Dorsolateral prefrontal cortex (tissue), 120 donors: ENCODE measurements at regions of chr14 and their contacts with region 1.

Region 1: DNA sequence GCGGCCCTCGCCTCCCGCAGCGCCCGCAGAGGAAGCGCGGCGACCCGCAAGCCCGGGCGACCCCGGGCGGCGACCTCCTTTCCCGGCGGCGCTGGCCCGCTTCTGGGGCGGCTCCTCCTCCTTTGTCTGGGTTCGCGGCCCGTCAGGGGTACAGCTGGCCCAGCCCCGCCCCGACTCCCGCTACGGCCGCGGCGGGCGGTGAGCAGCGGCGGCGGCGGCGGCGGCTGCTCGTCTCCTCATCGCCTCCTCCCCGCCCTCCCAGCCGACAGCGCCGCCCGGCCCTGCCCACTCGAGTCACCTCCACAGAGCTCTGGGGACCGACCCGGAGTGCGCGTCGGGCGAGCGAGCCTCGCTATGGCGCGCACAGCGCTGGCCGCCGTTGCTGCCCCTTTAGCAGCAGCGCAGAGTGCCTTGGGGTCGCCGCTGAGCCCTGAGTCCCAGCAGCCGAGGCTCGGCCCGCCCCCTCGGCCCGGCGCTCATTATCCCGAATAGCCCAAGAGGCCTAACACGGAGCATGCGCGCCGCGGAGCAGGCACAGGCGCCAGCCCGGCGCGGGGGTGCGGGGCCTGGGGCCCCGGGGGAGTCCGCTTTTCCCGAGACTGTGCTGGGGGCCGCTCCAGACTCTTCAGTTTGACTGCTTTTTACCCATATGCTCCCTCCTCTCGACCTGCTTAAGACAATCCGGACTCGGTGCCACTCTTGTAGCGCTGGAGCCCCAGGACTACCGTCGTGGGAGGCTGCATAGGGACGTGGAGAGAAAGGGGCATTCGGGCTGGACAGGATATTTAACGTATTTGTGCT is at the start of gene SOS2:
- DNase-seq: peak; percentile 77 to 89 (median 84)
- H3K4me3 ChIP-seq: peak within 1 kb of the TSS; percentile 53 to 90 (median 79)
- H3K27ac ChIP-seq: peak within 1 kb of the TSS; percentile 83 to 100 (median 96)
- H3K27me3 ChIP-seq: no peaks in the 10 kb centered on the region
- CTCF ChIP-seq: peak in 51 of 56 donors; percentile 6 to 69 (median 33)
- total RNA-seq, gene SOS2: 23.8 to 58.9 (median 37.3) TPM

Region 2: GRCh38 chr14:49852301-49853157 is 379.1 kb before region 1 on chr14 and contains the start of gene NEMF:
- intact Hi-C with region 1: loop called in 1 of 2 experiments (anchors 5 kb)
- DNase-seq: peak; percentile 72 to 91 (median 84)
- H3K4me3 ChIP-seq: peak within 1 kb of the TSS; percentile 71 to 100 (median 91)
- H3K27ac ChIP-seq: peak within 1 kb of the TSS; percentile 70 to 96 (median 91)
- H3K27me3 ChIP-seq: no peaks in the 10 kb centered on the region
- CTCF ChIP-seq: peak; percentile 75 to 98 (median 90)
- total RNA-seq, gene NEMF: 91.8 to 161 (median 124) TPM

Region 3: GRCh38 chr14:49862089-49862673 is 369.5 kb before region 1 on chr14:
- intact Hi-C with region 1: loop called in 1 of 2 experiments (anchors 2 kb)
- DNase-seq: peak; percentile 63 to 86 (median 78)
- H3K4me3 ChIP-seq: peak overlapping the region; percentile 40 to 95 (median 77)
- H3K27ac ChIP-seq: peak overlapping the region; percentile 81 to 100 (median 98)
- H3K27me3 ChIP-seq: no peaks in the 10 kb centered on the region
- CTCF ChIP-seq: peak; percentile 87 to 100 (median 99)

Region 4: GRCh38 chr14:49892636-49893308 is 338.9 kb before region 1 on chr14 and contains the start of gene ARF6:
- intact Hi-C with region 1: loop called in 1 of 2 experiments (anchors 5 kb)
- DNase-seq: peak; percentile 95 to 99 (median 97)
- H3K4me3 ChIP-seq: peak within 1 kb of the TSS; percentile 66 to 100 (median 97)
- H3K27ac ChIP-seq: peak within 1 kb of the TSS; percentile 89 to 100 (median 97)
- H3K27me3 ChIP-seq: no peaks in the 10 kb centered on the region
- CTCF ChIP-seq: peak in 49 of 56 donors; percentile 11 to 72 (median 40)
- total RNA-seq, gene ARF6: 16.6 to 28.7 (median 22.5) TPM

Region 5: DNA sequence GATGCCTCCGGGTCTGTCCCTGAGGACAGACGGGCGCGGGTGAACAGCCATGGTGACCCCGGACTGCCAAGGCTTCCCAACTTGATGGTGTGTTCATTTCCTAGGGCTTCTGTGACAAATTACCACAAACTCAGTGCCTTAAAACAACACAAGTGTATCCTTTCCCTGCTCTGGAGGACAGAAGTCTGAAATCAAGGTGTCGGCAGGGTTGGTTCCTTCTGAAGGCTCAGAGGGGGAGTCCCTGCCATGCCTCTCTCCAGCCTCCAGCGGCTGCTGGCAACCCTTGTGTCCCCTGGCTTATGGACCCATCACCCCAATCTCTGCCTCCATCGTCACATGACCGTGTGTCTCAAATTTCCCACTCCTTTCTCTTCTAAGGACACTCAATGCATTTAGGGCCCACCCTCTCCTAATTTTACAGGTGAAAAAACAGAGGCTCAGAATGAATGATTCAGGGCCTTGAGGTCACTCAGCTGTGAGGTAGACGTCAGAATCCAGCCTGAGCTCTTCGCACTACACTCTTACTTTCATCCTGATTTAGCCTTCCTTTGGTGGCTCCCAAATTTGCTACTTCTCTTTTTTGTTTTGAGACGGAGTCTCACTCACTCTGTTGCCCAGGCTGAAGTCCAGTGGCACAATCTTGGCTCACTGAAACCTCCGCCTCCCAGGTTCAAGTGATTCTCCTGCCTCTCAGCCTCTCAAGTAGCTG is 160.7 kb before region 1 on chr14:
- intact Hi-C with region 1: no loop called
- DNase-seq: no peak
- H3K4me3 ChIP-seq: no peak overlapping the region
- H3K27ac ChIP-seq: no peak overlapping the region
- H3K27me3 ChIP-seq: no peaks in the 10 kb centered on the region
- CTCF ChIP-seq: no peak

Region 6: DNA sequence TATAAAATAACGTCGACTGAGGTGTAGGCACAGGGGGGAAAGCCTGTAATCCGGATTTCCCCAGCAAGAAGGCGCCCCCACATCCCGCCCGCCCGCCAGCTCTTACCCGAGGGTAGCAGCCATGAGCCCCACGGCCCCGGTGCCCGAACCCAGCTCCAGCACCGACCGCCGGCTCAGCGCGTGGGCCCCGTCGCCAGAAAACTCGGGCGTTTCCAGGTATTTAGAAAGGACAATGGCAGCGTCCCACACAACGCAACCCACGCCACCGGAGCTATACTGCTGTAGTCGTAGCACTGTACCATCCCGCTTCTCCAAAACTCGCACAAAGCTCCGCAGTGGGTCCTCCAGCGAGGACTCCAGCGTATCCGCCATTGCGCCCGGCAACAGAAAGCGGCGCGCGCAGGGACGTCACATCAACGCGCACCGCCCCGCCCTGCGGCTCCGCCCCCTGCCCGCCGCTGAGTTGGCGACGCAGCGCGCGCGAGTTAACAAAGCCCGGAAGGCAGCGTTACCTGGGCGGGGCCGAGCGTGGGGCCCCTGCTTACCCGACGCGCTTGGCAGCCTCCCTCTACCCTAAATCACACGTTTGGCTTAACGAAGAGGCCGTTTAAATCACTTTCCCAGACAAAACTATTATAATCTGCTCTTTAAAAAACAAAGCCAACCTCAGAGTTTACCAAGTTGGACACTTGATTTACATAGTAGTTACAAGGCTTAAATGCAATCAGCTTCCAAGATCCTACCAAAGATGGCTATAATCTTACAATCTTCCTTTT is 115.3 kb before region 1 on chr14 and contains the start of gene VCPKMT:
- intact Hi-C with region 1: loop called (anchors 5 kb)
- DNase-seq: peak; percentile 86 to 94 (median 90)
- H3K4me3 ChIP-seq: peak within 1 kb of the TSS; percentile 61 to 95 (median 80)
- H3K27ac ChIP-seq: peak within 1 kb of the TSS; percentile 76 to 98 (median 93)
- H3K27me3 ChIP-seq: no peaks in the 10 kb centered on the region
- CTCF ChIP-seq: peak in 37 of 56 donors; percentile 6 to 56 (median 37)
- total RNA-seq, gene VCPKMT: 6.6 to 20.4 (median 13.4) TPM

Region 7: DNA sequence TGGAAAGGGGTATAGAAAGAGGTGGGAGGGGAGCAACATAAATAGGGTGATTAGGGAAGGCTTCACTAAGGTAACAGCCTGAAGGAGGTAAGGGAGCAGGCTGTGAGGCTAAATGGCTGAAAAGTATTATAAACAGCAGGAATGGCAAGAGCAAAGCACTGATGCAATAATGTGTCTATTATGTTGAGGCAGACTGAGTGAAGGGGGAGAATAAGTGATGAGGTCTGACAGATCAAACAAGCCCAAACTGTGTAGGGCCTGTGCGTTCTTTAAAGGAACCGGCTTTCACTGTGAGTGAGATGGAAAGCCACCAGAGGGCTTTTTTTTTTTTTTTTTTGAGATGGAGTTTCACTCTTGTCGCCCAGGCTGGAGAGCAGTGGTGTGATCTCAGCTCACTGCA is 108.6 kb before region 1 on chr14:
- intact Hi-C with region 1: loop called (anchors 5 kb)
- DNase-seq: no peak
- H3K4me3 ChIP-seq: peak overlapping the region in 3 of 59 donors; percentile 2 to 17 (median 8)
- H3K27ac ChIP-seq: peak overlapping the region in 52 of 59 donors; percentile 3 to 84 (median 58)
- H3K27me3 ChIP-seq: no peaks in the 10 kb centered on the region
- CTCF ChIP-seq: peak in 5 of 56 donors; percentile 7 to 22 (median 12)

Region 8: DNA sequence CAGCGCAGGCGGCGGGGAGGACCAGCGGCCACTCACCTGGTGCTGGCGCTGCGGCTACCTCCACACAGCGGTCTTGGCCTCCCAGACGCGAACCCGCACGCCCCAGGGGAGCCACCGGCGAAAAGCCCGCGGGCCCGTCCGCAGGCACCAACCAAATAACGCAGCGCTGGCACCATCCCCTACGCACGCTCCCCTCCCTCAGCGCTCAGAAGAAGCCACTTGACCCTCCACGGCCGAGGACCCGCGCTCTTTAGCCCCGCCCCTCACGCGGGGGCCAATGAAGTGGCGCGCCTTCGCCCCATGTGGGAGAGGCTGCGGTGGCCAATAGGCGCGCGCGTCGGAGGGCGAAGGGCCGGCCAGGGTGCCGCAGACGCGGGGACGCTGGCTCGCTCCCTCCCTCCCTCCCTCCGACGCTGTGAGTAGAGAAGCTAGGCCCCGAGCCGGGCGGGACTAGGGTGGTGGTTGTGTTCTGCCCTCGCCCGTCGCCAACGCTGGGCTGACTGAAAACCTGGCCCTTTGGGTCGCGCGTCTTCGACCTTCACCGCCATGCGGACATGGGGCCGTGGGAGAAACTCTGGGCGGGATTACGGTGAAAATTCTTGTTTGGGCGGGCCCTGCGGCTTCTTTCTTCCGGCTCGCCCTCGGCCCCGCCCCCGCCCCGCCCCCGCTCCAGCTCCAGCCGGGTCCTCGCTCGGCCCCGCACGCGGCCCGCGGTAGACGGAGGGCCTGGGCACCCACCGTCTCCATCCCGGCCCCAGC is 80.5 kb after region 1 on chr14 and contains the starts of genes DMAC2L and L2HGDH:
- intact Hi-C with region 1: loop called (anchors 5 kb)
- DNase-seq: peak; percentile 89 to 97 (median 94)
- H3K4me3 ChIP-seq: peak within 1 kb of the TSS; percentile 65 to 100 (median 91)
- H3K27ac ChIP-seq: peak within 1 kb of the TSS; percentile 58 to 96 (median 93)
- H3K27me3 ChIP-seq: no peaks in the 10 kb centered on the region
- CTCF ChIP-seq: peak in 40 of 56 donors; percentile 1 to 55 (median 32)
- total RNA-seq, gene DMAC2L: 12.3 to 38.0 (median 23.5) TPM
- total RNA-seq, gene L2HGDH: 8.9 to 22.1 (median 15.0) TPM